AG04449 (cell line): ENCODE measurements at regions of chr3 and their contacts with region 1.

Region 1: GRCh38 chr3:46488735-46489361 is 8.9 kb upstream of the RTP3 start:
- DNase-seq: no peak
- H3K4me3 ChIP-seq: no peak overlapping the region
- CTCF ChIP-seq: peak; percentile 100

Region 2: DNA sequence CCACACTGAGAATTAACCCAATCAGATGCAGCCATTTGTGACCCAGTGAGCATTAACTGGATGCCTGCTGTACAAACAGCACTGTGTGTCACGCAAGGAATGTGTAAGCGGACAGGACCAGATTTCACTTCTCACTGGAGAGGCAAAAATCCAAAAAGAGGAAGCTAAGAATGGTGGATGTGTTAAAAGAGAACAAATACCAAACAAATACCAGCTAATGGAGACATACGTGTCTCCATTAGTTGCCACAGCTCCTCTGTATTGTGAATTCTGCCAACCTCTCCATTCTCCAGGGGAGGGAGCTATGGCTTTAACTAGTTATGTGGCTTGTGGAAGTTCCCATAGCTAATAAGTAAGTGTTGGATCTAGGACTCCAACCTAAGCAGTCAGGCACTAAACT is 26.7 kb before region 1 on chr3:
- CTCF ChIA-PET with region 1: interaction called, 10 read pairs
- POLR2A ChIA-PET with region 1: no interaction called
- DNase-seq: no peak
- H3K4me3 ChIP-seq: no peak overlapping the region
- CTCF ChIP-seq: no peak

Region 3: GRCh38 chr3:46517016-46517793 is 28.4 kb after region 1 on chr3:
- CTCF ChIA-PET with region 1: interaction called, 15 read pairs
- POLR2A ChIA-PET with region 1: no interaction called
- DNase-seq: no peak
- H3K4me3 ChIP-seq: no peak overlapping the region
- CTCF ChIP-seq: no peak

Region 4: DNA sequence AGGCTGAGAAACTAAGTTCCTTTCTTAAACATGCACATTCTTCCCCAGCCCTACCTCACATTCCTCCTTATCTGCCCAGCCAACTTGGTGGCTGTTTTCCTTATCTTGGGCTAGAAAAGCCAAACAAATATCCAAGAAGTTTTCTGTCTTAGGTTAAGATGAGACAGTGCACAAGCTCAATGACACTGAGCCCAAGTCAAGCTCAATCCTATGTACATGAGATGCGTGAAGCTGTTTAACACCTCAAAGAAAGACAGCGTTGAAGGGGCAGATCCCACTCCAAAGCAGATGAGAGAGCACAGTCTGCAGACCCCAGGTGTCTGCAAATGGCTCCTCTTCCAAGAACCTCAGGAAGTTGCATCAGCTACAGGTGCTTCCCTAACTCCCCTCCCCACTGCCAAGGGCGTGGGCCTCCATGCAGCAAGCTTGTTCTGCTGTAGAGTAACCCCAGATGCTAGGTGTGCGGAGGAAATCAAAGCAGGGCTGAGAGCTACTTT is 60.6 kb after region 1 on chr3:
- CTCF ChIA-PET with region 1: interaction called, 15 read pairs
- POLR2A ChIA-PET with region 1: no interaction called
- DNase-seq: no peak
- H3K4me3 ChIP-seq: no peak overlapping the region
- CTCF ChIP-seq: no peak

Region 5: GRCh38 chr3:46585799-46586693 is 97.2 kb after region 1 on chr3:
- CTCF ChIA-PET with region 1: interaction called, 13 read pairs
- POLR2A ChIA-PET with region 1: no interaction called
- DNase-seq: no peak
- H3K4me3 ChIP-seq: no peak overlapping the region
- CTCF ChIP-seq: no peak

Region 6: GRCh38 chr3:46656778-46657556 is 168.1 kb after region 1 on chr3:
- CTCF ChIA-PET with region 1: interaction called, 13 read pairs
- POLR2A ChIA-PET with region 1: no interaction called
- DNase-seq: no peak
- H3K4me3 ChIP-seq: no peak overlapping the region
- CTCF ChIP-seq: no peak

Region 7: GRCh38 chr3:46895204-46895660 is 406.4 kb after region 1 on chr3:
- CTCF ChIA-PET with region 1: interaction called, 13 read pairs
- POLR2A ChIA-PET with region 1: no interaction called
- DNase-seq: no peak
- H3K4me3 ChIP-seq: no peak overlapping the region
- CTCF ChIP-seq: peak; percentile 88

Region 8: DNA sequence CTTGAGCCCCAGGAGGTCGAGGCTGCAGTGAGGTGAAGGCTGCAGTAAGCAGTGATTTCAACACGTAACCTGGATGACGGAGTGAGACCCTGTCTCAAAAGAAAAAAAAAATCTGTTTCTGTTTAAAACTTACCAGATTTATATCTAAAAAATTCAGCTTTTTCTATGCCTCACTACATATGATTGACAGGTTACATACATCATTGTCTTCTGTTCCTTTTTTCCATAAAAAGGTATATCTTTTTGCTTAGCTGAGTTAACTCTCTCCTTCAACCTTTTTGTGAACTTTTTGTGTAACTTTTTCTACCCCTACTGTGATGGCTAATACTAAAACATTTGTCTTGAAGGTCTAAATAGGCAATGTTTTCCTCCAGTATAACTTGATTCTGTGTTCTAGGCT is 713.7 kb after region 1 on chr3:
- CTCF ChIA-PET with region 1: no interaction called
- POLR2A ChIA-PET with region 1: no interaction called
- DNase-seq: no peak
- H3K4me3 ChIP-seq: no peak overlapping the region
- CTCF ChIP-seq: no peak